Left cardiac atrium (tissue), 4 donors: ENCODE measurements at regions of chr22 and their contacts with region 1.

Region 1: GRCh38 chr22:42769574-42770447 is 49.1 kb upstream of the A4GALT start:
- DNase-seq: peak; percentile 85
- ATAC-seq: peak; percentile 53 to 86

Region 2: GRCh38 chr22:42717197-42717928 is 52.4 kb before region 1 on chr22:
- intact Hi-C with region 1: loop called in 1 of 2 experiments (anchors 10 kb)
- DNase-seq: no peak
- ATAC-seq: peak in 1 of 2 donors; percentile 52

Region 3: DNA sequence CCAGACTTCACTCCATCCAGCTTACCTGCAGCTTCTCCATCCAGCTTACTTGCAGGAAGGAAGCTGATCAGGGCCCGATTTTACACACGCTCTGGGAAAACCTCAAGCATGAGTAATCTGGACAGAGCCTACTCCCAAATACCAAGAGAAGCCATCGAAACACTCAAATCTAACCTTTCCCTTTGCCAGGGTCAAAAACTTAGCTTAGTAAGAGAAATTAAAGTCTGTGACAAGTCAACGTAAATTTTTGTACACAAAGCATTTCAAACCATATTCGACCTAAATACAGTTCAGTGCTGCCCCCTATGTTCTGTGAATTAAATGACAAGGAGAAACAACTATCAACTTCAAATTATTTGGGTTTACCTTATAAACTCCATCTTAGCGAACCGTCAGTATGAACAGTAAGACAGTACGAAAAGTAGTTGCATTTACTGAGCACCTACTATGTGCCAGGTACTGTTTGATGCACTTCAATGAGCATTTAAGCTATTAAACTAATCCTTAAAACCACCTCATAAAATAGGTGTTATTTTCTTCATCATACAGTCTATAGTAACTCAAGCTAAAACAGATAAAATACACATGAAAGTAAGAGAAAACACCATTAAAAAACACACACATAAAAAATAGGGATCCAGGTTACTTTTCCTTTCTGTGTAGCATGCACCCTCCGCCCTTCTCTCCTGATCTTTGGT is 50.4 kb after region 1 on chr22:
- intact Hi-C with region 1: no loop called
- DNase-seq: no peak
- ATAC-seq: no peak